ENCODE measurements at regions of chr10 and their contacts with region 1.

Region 1: DNA sequence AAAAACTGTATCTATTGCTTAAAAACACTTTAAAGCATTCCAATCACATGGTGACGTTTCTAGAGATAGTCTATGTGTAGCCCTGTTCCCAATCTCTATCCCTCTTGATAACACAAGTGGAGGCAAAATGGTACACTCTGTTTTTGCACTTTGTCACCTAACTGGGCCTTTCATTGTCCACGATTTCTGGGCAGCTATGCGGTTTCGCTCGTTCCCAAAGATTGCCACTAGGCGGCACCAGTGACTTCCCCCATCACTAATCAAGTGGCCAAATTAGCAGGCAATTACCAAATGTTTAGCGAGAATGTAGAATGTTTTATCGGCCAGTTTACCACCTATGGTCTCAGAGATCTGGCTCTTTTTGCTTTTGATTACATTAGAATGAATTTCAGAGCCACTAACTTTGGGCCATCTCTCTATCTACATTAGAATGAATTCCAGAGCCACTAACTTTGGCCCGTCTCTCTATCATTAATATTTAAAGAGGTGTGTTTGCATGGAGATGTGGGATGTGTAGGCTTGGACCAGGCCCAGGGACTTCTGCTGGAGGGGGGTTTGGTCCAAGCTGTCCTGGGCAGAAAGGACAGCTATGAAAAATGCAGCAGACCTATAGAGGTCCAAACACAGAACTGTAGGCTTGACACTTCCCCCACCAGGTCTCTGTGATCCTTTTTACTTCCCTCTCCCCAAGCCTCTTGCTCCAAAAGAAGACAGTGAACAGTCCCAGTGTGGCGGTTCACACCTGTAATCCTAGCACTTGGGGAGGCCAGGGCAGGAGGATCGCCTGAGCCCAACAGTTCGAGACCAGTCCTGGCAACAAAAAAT is 90.1 kb downstream of the EPC1 start:
- DNase-seq: peak; percentile 73
- H3K4me3 ChIP-seq: no peak overlapping the region
- H3K27ac ChIP-seq: no peak overlapping the region
- H3K4me1 ChIP-seq: peaks cover 13% of the 10 kb centered on the region
- H3K27me3 ChIP-seq: no peaks in the 10 kb centered on the region
- CTCF ChIP-seq: peak; percentile 94

Region 2: GRCh38 chr10:30392564-30392990 is 1864.2 kb before region 1 on chr10:
- CTCF ChIA-PET with region 1: interaction called, 20 read pairs
- POLR2A ChIA-PET with region 1: no interaction called
- intact Hi-C with region 1: no loop called
- DNase-seq: peak; percentile 77
- H3K4me3 ChIP-seq: peak overlapping the region; percentile 23
- H3K27ac ChIP-seq: no peak overlapping the region
- H3K4me1 ChIP-seq: no peaks in the 10 kb centered on the region
- H3K27me3 ChIP-seq: no peaks in the 10 kb centered on the region
- CTCF ChIP-seq: peak; percentile 92

Region 3: GRCh38 chr10:32217216-32217615 is 39.6 kb before region 1 on chr10:
- CTCF ChIA-PET with region 1: no interaction called
- POLR2A ChIA-PET with region 1: no interaction called
- intact Hi-C with region 1: loop called (anchors 1 kb)
- DNase-seq: no peak
- H3K4me3 ChIP-seq: no peak overlapping the region
- H3K27ac ChIP-seq: no peak overlapping the region
- H3K4me1 ChIP-seq: no peaks in the 10 kb centered on the region
- H3K27me3 ChIP-seq: no peaks in the 10 kb centered on the region
- CTCF ChIP-seq: no peak

Region 4: DNA sequence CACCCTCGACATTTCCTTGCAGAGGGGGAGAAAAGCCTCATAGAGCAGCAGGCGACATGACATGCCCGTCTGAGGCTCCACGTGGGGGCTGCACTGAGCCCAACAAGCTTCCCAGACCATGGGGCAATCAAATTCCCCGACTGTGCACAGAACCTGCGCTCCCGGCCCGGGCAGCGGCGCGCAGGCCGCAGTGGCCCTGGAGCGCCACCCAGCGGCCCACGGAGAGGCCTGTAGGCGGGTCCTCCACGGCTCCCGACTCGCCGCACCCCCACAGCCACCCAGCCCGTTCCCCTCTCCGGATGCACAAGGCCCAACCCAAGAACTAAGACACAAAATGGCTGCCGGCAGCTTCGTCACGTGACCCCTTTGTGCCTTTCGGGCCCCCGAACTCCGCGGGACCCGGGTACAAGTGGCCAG is 89.3 kb after region 1 on chr10:
- CTCF ChIA-PET with region 1: interaction called, 4 read pairs
- POLR2A ChIA-PET with region 1: no interaction called
- intact Hi-C with region 1: loop called (anchors 1 kb)
- DNase-seq: peak; percentile 98
- H3K4me3 ChIP-seq: peak overlapping the region; percentile 76
- H3K27ac ChIP-seq: peak overlapping the region; percentile 100
- H3K4me1 ChIP-seq: peaks cover 51% of the 10 kb centered on the region
- H3K27me3 ChIP-seq: no peaks in the 10 kb centered on the region
- CTCF ChIP-seq: peak; percentile 98

Region 5: GRCh38 chr10:32367793-32368453 is 111.1 kb after region 1 on chr10:
- CTCF ChIA-PET with region 1: no interaction called
- POLR2A ChIA-PET with region 1: no interaction called
- intact Hi-C with region 1: loop called (anchors 5 kb)
- DNase-seq: peak; percentile 84
- H3K4me3 ChIP-seq: peak overlapping the region; percentile 76
- H3K27ac ChIP-seq: peak overlapping the region; percentile 69
- H3K4me1 ChIP-seq: peaks cover 54% of the 10 kb centered on the region
- H3K27me3 ChIP-seq: no peaks in the 10 kb centered on the region
- CTCF ChIP-seq: peak; percentile 78

Region 6: DNA sequence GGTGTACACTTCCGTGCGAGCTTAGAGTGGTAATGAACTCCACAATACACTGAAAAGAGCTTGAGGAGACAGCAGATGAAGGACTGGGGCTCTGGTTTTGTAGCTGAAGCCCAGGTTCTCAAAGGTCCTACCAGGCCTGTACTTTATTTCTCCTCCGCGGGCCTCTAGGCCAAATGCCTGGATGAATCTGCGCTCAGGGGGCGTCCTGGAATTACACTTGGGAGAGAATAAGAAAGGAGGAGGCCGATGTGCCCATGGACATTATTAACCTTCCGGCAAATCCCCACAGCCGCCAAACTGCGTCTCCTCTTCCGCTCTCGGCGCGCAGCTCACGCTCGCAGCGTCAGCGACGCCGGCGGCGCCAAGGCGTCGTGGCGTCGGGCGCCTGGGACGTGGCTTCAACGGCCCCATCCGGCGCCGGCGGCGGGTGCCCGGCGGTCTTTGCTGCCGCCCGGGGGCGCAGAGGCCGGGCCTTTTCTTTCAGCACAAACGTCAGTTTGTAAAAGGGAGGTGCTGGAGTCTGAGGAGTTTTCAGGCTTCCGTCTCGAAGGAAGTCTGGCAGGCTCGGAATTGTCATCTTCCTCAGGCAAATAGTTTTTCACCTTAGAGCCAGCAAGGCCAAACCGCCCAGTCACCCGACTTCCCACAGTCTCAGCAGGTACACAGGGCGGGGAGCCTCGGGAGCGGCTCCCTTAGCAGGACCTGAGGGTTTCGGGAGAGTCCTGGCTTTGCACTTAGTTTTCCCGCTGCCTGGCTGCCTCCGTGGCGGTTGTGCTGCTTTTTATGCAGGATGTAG is 189.1 kb after region 1 on chr10 and contains the start of gene CCDC7:
- CTCF ChIA-PET with region 1: no interaction called
- POLR2A ChIA-PET with region 1: no interaction called
- intact Hi-C with region 1: loop called (anchors 5 kb)
- DNase-seq: peak; percentile 97
- H3K4me3 ChIP-seq: peak within 1 kb of the TSS; percentile 64
- H3K27ac ChIP-seq: peak within 1 kb of the TSS; percentile 96
- H3K4me1 ChIP-seq: peaks cover 6% of the 10 kb centered on the region
- H3K27me3 ChIP-seq: no peaks in the 10 kb centered on the region
- CTCF ChIP-seq: peak; percentile 55
- total RNA-seq, gene CCDC7: 12.5 and 16.4 TPM in 2 replicates

Measured in A673 (cell line).